CD4-positive, alpha-beta memory T cell (primary cell): ENCODE measurements at regions of chr20 and their contacts with region 1.

Region 1: GRCh38 chr20:53934421-53935343 is 135.7 kb downstream of the BCAS1 start:
- DNase-seq: peak in 2 of 5 donors; percentile 19 to 43
- H3K4me3 ChIP-seq: no peak overlapping the region
- H3K4me3 Mint-ChIP-seq: peak overlapping the region; percentile 45 to 86 (median 76)
- H3K27ac ChIP-seq: peak overlapping the region; percentile 1
- H3K27ac Mint-ChIP-seq: peak overlapping the region; percentile 54 to 87 (median 76)
- H3K4me1 ChIP-seq: peaks cover 30% of the 10 kb centered on the region
- H3K4me1 Mint-ChIP-seq: peaks cover 24 to 40% (median 32%) of the 10 kb centered on the region in 4 donors
- H3K27me3 ChIP-seq: no peaks in the 10 kb centered on the region
- H3K27me3 Mint-ChIP-seq: peaks cover 0 to 2% of the 10 kb centered on the region in 2 donors

Region 2: GRCh38 chr20:53949319-53949889 is 14.7 kb after region 1 on chr20:
- CTCF ChIA-PET with region 1: interaction called, 23 read pairs
- POLR2A ChIA-PET with region 1: interaction called, 21 read pairs
- intact Hi-C with region 1: no loop called
- DNase-seq: peak; percentile 82 to 92 (median 87)
- H3K4me3 ChIP-seq: peak overlapping the region; percentile 6 to 30
- H3K4me3 Mint-ChIP-seq: peak overlapping the region; percentile 39 to 79 (median 72)
- H3K27ac ChIP-seq: peak overlapping the region; percentile 78
- H3K27ac Mint-ChIP-seq: peak overlapping the region; percentile 96 to 100 (median 99)
- H3K4me1 ChIP-seq: peaks cover 36% of the 10 kb centered on the region
- H3K4me1 Mint-ChIP-seq: peaks cover 24 to 41% (median 32%) of the 10 kb centered on the region in 4 donors
- H3K27me3 ChIP-seq: no peaks in the 10 kb centered on the region
- H3K27me3 Mint-ChIP-seq: no peaks in the 10 kb centered on the region

Region 3: DNA sequence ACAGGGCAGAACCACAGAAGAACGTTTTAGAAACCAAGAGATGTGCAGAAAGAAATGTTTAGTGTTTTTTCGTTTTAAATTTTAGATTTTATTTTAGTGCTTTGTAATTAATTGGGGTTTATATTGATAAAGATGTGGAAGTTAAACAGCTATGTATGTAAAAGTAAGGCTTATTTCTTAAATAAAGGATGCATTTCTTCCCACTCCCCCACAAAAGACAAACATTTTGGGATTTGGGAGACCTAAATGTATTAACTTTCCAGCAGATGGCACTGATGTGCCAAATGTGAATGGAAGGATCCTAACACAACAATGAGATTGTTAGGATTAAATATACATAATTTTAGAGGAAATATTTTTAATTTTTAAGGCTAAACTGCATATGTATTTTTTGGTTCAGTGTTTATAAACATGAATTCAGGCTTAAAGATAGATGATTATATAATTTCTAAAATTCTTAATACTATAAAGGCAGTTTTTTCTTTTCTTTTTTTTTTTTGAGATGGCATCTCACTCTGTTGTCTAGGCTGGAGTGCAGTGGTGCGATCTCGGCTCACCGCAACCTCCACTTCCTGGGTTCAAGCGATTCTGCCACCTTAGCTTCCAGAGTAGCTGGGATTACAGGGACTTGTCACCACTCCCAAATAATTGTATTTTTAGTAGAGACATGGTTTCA is 285.2 kb after region 1 on chr20:
- CTCF ChIA-PET with region 1: no interaction called
- POLR2A ChIA-PET with region 1: no interaction called
- intact Hi-C with region 1: no loop called
- DNase-seq: no peak
- H3K4me3 ChIP-seq: no peak overlapping the region
- H3K4me3 Mint-ChIP-seq: no peak overlapping the region
- H3K27ac ChIP-seq: no peak overlapping the region
- H3K27ac Mint-ChIP-seq: peak overlapping the region in 1 of 7 donors; percentile 66
- H3K4me1 ChIP-seq: peaks cover 16% of the 10 kb centered on the region
- H3K4me1 Mint-ChIP-seq: peaks cover 11 to 23% (median 17%) of the 10 kb centered on the region in 4 donors
- H3K27me3 ChIP-seq: no peaks in the 10 kb centered on the region
- H3K27me3 Mint-ChIP-seq: no peaks in the 10 kb centered on the region